ENCODE measurements at regions of chr16 and their contacts with region 1.

Region 1: DNA sequence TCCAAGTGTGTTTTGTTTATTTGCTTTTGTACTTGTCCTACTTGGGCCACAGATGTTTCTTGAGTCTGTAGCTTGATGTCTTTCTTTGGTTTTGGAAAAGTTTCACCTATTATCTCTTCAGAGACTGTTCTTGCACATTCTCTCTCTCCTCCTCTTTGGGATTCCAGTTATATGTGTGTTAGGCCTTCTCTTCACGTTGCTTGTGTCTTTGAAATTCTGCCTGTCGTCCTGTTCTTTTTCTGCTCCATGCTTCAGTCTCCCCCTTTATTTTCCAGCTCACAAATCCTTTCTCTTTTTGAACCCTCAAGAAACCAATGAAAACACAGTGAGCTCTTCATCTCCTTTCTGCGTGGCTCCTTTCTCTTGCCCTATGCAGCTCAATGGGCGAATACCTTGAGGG is 7.9 kb downstream of the VPS35L start:
- DNase-seq: no peak
- ATAC-seq: no peak
- H3K4me3 ChIP-seq: no peak overlapping the region
- H3K27ac ChIP-seq: no peak overlapping the region
- H3K4me1 ChIP-seq: peaks cover 0 to 4% (median 0%) of the 10 kb centered on the region in 9 donors
- H3K27me3 ChIP-seq: no peaks in the 10 kb centered on the region
- CTCF ChIP-seq: no peak

Region 2: DNA sequence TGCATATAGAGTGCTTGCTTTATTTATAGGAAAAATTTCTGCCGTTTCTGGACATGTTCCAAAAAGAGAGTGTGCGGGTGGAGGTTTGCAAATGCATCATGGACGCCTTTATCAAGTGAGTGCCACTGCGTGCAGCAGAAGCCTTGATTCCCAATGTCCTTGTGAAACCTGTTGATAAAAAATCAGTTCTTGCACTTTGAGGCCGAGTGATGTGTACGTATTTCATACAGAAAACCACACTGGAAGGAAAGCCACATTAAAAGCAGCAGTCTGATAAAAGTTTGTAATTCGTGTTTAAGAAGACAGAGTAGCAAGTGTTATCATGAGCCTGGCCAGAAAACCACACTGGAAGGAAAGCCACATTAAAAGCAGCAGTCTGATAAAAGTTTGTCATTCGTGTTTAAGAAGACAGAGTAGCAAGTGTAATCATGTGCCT is 76.6 kb after region 1 on chr16:
- intact Hi-C with region 1: loop called in 1 of 10 experiments (anchors 10 kb)
- DNase-seq: no peak
- ATAC-seq: peak in 3 of 8 donors; percentile 18 to 67 (median 44)
- H3K4me3 ChIP-seq: no peak overlapping the region
- H3K27ac ChIP-seq: peak overlapping the region in 5 of 10 donors; percentile 3 to 48 (median 6)
- H3K4me1 ChIP-seq: peaks cover 0 to 37% (median 10%) of the 10 kb centered on the region in 9 donors
- H3K27me3 ChIP-seq: no peaks in the 10 kb centered on the region
- CTCF ChIP-seq: no peak

Measured in heart right ventricle (tissue), 16 donors.